B cell (primary cell): ENCODE measurements at regions of chr19 and their contacts with region 1.

Region 1: DNA sequence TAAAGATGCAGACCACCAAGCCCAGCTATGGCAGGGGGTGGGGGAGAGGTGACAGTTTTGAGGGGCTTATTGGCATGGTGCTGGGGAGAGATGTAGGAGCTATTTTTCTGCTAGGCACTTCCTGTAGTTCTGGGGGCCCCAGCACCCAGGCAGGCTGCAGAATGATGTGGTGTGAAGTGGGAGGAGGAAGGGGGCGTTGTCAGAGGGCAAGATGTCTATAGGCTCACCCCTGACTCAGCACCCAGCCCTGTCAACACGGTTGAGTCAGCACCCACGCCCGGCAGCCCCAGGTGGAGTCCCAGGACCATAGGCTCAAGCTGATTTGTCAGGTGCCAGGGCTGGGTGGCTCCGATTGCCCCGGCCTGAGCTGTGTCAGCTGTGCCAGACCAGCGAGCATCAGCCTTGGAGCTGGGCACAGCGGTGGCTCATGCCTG is 5.8 kb downstream of the KLF2 start:
- DNase-seq: peak; percentile 95
- ATAC-seq: peak; percentile 63
- H3K4me3 ChIP-seq: peak overlapping the region in 1 of 5 experiments; percentile 20
- H3K4me3 Mint-ChIP-seq: peak overlapping the region; percentile 70
- H3K27ac ChIP-seq: peak overlapping the region; percentile 23 to 35
- H3K27ac Mint-ChIP-seq: peak overlapping the region; percentile 98
- H3K4me1 ChIP-seq: peaks cover 24 to 40% of the 10 kb centered on the region in 2 donors
- H3K4me1 Mint-ChIP-seq: peaks cover 51% of the 10 kb centered on the region
- H3K27me3 ChIP-seq: no peaks in the 10 kb centered on the region
- H3K27me3 Mint-ChIP-seq: no peaks in the 10 kb centered on the region
- CTCF ChIP-seq: no peak

Region 2: GRCh38 chr19:16118489-16119033 is 211.8 kb before region 1 on chr19:
- CTCF ChIA-PET with region 1: no interaction called
- POLR2A ChIA-PET with region 1: interaction called, 10 read pairs
- intact Hi-C with region 1: no loop called
- DNase-seq: peak; percentile 93
- ATAC-seq: peak; percentile 91
- H3K4me3 ChIP-seq: peak overlapping the region in 3 of 5 experiments; percentile 11 to 48 (median 23)
- H3K4me3 Mint-ChIP-seq: peak overlapping the region; percentile 70
- H3K27ac ChIP-seq: peak overlapping the region; percentile 86 to 88
- H3K27ac Mint-ChIP-seq: peak overlapping the region; percentile 97
- H3K4me1 ChIP-seq: peaks cover 64 to 75% of the 10 kb centered on the region in 2 donors
- H3K4me1 Mint-ChIP-seq: peaks cover 66% of the 10 kb centered on the region
- H3K27me3 ChIP-seq: no peaks in the 10 kb centered on the region
- H3K27me3 Mint-ChIP-seq: no peaks in the 10 kb centered on the region
- CTCF ChIP-seq: no peak

Region 3: DNA sequence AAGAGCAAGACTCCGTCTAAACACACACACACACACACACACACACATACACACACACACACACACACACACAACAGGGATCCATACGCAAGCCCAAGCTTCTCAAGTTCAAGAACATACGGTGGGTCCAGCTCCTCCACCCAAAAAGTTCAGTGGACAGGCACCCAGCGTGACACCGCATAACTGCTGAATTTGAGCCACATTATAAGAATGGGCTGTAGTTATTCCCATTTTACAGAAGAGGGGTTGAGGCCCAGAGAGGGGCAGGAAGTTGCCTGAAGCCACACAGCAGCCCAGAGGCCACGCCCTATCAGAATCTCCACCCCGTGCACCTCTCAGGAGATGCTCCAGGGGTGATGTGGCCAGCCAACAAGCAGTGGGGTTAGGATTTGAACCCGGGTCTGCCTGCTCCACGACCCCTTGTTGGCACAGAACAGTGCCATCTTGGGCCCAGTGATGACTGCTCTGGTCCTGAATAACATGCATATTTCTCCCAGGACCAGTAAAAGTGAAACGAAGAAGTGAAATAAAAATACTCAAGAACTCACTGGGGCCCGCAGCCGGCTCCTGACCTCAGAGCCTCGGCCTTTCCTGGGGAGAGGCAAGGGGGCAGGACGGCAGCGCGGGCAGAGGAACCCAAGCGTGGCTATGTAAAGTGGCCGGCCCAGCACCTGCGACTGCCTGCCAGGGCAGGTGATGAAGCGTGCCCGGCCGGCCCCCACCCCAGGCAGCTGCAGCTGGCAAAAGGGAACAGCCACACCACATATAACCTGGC is 70.8 kb before region 1 on chr19:
- CTCF ChIA-PET with region 1: interaction called, 11 read pairs
- POLR2A ChIA-PET with region 1: interaction called, 67 read pairs
- intact Hi-C with region 1: no loop called
- DNase-seq: peak; percentile 94
- ATAC-seq: peak; percentile 79
- H3K4me3 ChIP-seq: peak overlapping the region in 1 of 5 experiments; percentile 42
- H3K4me3 Mint-ChIP-seq: peak overlapping the region; percentile 78
- H3K27ac ChIP-seq: peak overlapping the region; percentile 87 to 89
- H3K27ac Mint-ChIP-seq: peak overlapping the region; percentile 95
- H3K4me1 ChIP-seq: peaks cover 75 to 94% of the 10 kb centered on the region in 2 donors
- H3K4me1 Mint-ChIP-seq: peaks cover 83% of the 10 kb centered on the region
- H3K27me3 ChIP-seq: no peaks in the 10 kb centered on the region
- H3K27me3 Mint-ChIP-seq: no peaks in the 10 kb centered on the region
- CTCF ChIP-seq: no peak

Region 4: GRCh38 chr19:16293118-16294091 is 37.0 kb before region 1 on chr19:
- CTCF ChIA-PET with region 1: no interaction called
- POLR2A ChIA-PET with region 1: no interaction called
- intact Hi-C with region 1: no loop called
- DNase-seq: no peak
- ATAC-seq: no peak
- H3K4me3 ChIP-seq: no peak overlapping the region
- H3K4me3 Mint-ChIP-seq: no peak overlapping the region
- H3K27ac ChIP-seq: no peak overlapping the region
- H3K27ac Mint-ChIP-seq: no peak overlapping the region
- H3K4me1 ChIP-seq: no peaks in the 10 kb centered on the region
- H3K4me1 Mint-ChIP-seq: peaks cover 1% of the 10 kb centered on the region
- H3K27me3 ChIP-seq: peaks cover 0 to 3% (median 0%) of the 10 kb centered on the region in 4 experiments
- H3K27me3 Mint-ChIP-seq: no peaks in the 10 kb centered on the region
- CTCF ChIP-seq: no peak

Region 5: GRCh38 chr19:16363133-16363851 is 32.9 kb after region 1 on chr19:
- CTCF ChIA-PET with region 1: interaction called, 37 read pairs
- POLR2A ChIA-PET with region 1: interaction called, 337 read pairs
- intact Hi-C with region 1: loop called (anchors 1 kb)
- DNase-seq: peak; percentile 3
- ATAC-seq: no peak
- H3K4me3 ChIP-seq: no peak overlapping the region
- H3K4me3 Mint-ChIP-seq: peak overlapping the region; percentile 19
- H3K27ac ChIP-seq: no peak overlapping the region
- H3K27ac Mint-ChIP-seq: peak overlapping the region; percentile 53
- H3K4me1 ChIP-seq: peaks cover 82 to 98% of the 10 kb centered on the region in 2 donors
- H3K4me1 Mint-ChIP-seq: peaks cover 83% of the 10 kb centered on the region
- H3K27me3 ChIP-seq: no peaks in the 10 kb centered on the region
- H3K27me3 Mint-ChIP-seq: no peaks in the 10 kb centered on the region
- CTCF ChIP-seq: no peak

Region 6: GRCh38 chr19:16400911-16401591 is 70.7 kb after region 1 on chr19:
- CTCF ChIA-PET with region 1: interaction called, 9 read pairs
- POLR2A ChIA-PET with region 1: interaction called, 26 read pairs
- intact Hi-C with region 1: no loop called
- DNase-seq: no peak
- ATAC-seq: no peak
- H3K4me3 ChIP-seq: no peak overlapping the region
- H3K4me3 Mint-ChIP-seq: no peak overlapping the region
- H3K27ac ChIP-seq: peak overlapping the region in 1 of 2 donors; percentile 27
- H3K27ac Mint-ChIP-seq: peak overlapping the region; percentile 64
- H3K4me1 ChIP-seq: peaks cover 44 to 58% of the 10 kb centered on the region in 2 donors
- H3K4me1 Mint-ChIP-seq: peaks cover 56% of the 10 kb centered on the region
- H3K27me3 ChIP-seq: no peaks in the 10 kb centered on the region
- H3K27me3 Mint-ChIP-seq: no peaks in the 10 kb centered on the region
- CTCF ChIP-seq: no peak